Activated CD8-positive, alpha-beta T cell treated with anti-CD3 and anti-CD28 coated beads for 36 hours (primary cell): ENCODE measurements at regions of chr6 and their contacts with region 1.

Region 1: GRCh38 chr6:149565527-149566409 is at the start of gene GINM1:
- DNase-seq: peak; percentile 97
- ATAC-seq: peak; percentile 90
- H3K4me3 Mint-ChIP-seq: peak within 1 kb of the TSS; percentile 93
- H3K27ac Mint-ChIP-seq: peak within 1 kb of the TSS; percentile 89
- H3K4me1 Mint-ChIP-seq: peaks cover 30% of the 10 kb centered on the region
- H3K27me3 Mint-ChIP-seq: no peaks in the 10 kb centered on the region
- CTCF ChIP-seq: peak; percentile 71
- total RNA-seq, gene GINM1: 15.4 to 16.3 TPM

Region 2: GRCh38 chr6:149551920-149552319 is 13.8 kb before region 1 on chr6:
- CTCF ChIA-PET with region 1: interaction called, 27 read pairs
- POLR2A ChIA-PET with region 1: interaction called, 12 read pairs
- intact Hi-C with region 1: no loop called
- DNase-seq: no peak
- ATAC-seq: no peak
- H3K4me3 Mint-ChIP-seq: no peak overlapping the region
- H3K27ac Mint-ChIP-seq: no peak overlapping the region
- H3K4me1 Mint-ChIP-seq: peaks cover 3% of the 10 kb centered on the region
- H3K27me3 Mint-ChIP-seq: peaks cover 1% of the 10 kb centered on the region
- CTCF ChIP-seq: no peak

Region 3: DNA sequence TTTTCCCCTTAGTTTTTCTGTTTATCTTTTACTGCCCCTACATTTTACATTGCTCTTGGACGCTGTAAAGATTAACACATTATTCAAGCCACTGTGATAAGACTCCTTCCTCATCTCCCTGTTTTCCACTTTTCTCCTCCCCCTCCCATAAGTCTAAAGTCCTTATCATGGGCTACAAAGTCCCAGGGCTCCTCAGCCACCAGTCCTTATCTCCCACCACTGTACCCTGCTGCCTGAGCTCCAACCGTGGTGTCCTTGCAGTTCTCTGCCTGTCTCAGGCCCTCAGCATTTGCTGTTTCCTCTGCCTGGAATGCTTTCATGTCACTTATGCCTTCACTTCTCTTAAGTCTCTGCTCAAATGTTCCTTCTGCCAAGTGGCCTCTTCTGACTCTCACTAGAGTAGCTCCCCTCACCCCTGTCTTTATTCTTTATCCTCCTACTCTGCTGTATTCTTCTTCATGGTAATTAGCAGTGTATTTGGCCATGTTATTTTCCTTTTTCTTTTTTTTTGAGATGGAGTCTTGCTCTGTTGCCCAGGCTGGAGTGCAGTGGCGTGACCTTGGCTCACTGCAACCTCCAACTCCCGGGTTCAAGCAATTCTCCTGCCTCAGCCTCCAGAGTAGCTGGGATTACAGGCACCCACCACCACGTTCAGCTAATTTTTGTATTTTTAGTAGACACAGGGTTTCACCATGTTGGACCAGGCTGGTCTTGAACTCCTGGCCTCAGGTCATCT is 162.9 kb after region 1 on chr6:
- CTCF ChIA-PET with region 1: no interaction called
- POLR2A ChIA-PET with region 1: no interaction called
- intact Hi-C with region 1: no loop called
- DNase-seq: no peak
- ATAC-seq: no peak
- H3K4me3 Mint-ChIP-seq: no peak overlapping the region
- H3K27ac Mint-ChIP-seq: peak overlapping the region; percentile 24
- H3K4me1 Mint-ChIP-seq: peaks cover 9% of the 10 kb centered on the region
- H3K27me3 Mint-ChIP-seq: no peaks in the 10 kb centered on the region
- CTCF ChIP-seq: no peak